Aorta (tissue), 5 donors: ENCODE measurements at regions of chr1 and their contacts with region 1.

Region 1: GRCh38 chr1:17909634-17910033 is 154.5 kb downstream of the ACTL8 start:
- DNase-seq: no peak
- ATAC-seq: no peak
- H3K4me3 ChIP-seq: no peak overlapping the region
- H3K27ac ChIP-seq: no peak overlapping the region
- H3K4me1 ChIP-seq: no peaks in the 10 kb centered on the region
- H3K27me3 ChIP-seq: no peaks in the 10 kb centered on the region

Region 2: GRCh38 chr1:17624611-17625233 is 284.9 kb before region 1 on chr1:
- intact Hi-C with region 1: no loop called
- DNase-seq: peak; percentile 87 to 95
- ATAC-seq: peak; percentile 59
- H3K4me3 ChIP-seq: no peak overlapping the region
- H3K27ac ChIP-seq: peak overlapping the region; percentile 40 to 85
- H3K4me1 ChIP-seq: no peaks in the 10 kb centered on the region
- H3K27me3 ChIP-seq: no peaks in the 10 kb centered on the region

Region 3: GRCh38 chr1:17857996-17858395 is 51.6 kb before region 1 on chr1:
- intact Hi-C with region 1: loop called in 1 of 2 experiments (anchors 10 kb)
- DNase-seq: no peak
- ATAC-seq: no peak
- H3K4me3 ChIP-seq: no peak overlapping the region
- H3K27ac ChIP-seq: no peak overlapping the region
- H3K4me1 ChIP-seq: no peaks in the 10 kb centered on the region
- H3K27me3 ChIP-seq: no peaks in the 10 kb centered on the region